ENCODE measurements at regions of chr1 and their contacts with region 1.

Region 1: GRCh38 chr1:65002508-65003315 is 36.4 kb upstream of the JAK1 start:
- DNase-seq: peak; percentile 86
- ATAC-seq: peak; percentile 85
- H3K4me3 Mint-ChIP-seq: peak overlapping the region; percentile 70
- H3K27ac Mint-ChIP-seq: peak overlapping the region; percentile 87
- H3K4me1 Mint-ChIP-seq: peaks cover 28% of the 10 kb centered on the region
- H3K27me3 Mint-ChIP-seq: no peaks in the 10 kb centered on the region

Region 2: GRCh38 chr1:64877151-64877550 is 125.6 kb before region 1 on chr1:
- CTCF ChIA-PET with region 1: no interaction called
- POLR2A ChIA-PET with region 1: no interaction called
- intact Hi-C with region 1: loop called in 1 of 2 experiments (anchors 2 kb)
- DNase-seq: peak; percentile 43
- ATAC-seq: peak; percentile 88
- H3K4me3 Mint-ChIP-seq: peak overlapping the region; percentile 4
- H3K27ac Mint-ChIP-seq: peak overlapping the region; percentile 35
- H3K4me1 Mint-ChIP-seq: peaks cover 60% of the 10 kb centered on the region
- H3K27me3 Mint-ChIP-seq: no peaks in the 10 kb centered on the region

Region 3: GRCh38 chr1:64898107-64898845 is 104.4 kb before region 1 on chr1:
- CTCF ChIA-PET with region 1: interaction called, 3 read pairs
- POLR2A ChIA-PET with region 1: no interaction called
- intact Hi-C with region 1: loop called in 1 of 2 experiments (anchors 5 kb)
- DNase-seq: peak; percentile 64
- ATAC-seq: peak; percentile 79
- H3K4me3 Mint-ChIP-seq: no peak overlapping the region
- H3K27ac Mint-ChIP-seq: no peak overlapping the region
- H3K4me1 Mint-ChIP-seq: peaks cover 93% of the 10 kb centered on the region
- H3K27me3 Mint-ChIP-seq: no peaks in the 10 kb centered on the region

Region 4: DNA sequence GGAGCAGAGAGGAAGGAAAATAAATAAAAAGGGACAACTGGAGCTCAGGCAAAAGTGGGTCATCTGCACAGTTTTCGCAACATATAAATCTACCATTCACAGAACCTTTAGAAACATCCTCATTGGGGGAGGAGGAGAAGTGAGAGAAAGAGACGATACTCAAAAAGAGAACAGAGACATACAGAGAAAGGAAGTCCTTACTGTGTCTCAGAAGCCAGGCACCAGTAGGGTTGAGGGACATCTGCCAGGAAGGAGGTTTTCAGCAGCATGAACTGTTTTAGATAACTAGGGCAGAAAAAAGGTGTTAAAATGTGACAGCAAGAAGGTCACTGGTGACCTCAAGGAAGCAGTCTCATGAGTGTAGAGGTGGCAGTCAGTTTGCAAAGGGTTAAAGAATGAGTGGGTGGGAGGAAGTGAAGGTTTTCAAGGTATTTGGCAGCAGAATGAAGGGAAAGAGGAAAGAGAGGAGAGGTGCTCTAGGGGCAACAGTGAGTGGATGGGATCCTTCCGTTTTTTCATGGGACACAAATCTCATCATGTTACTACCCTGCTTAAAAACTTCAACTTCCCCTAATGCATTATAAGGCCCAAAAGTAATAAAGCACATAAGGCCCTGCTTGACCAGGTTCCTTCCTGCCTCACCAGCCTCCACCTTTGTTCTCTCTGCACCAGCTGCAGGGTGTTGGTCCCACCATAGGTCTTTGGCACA is 45.8 kb before region 1 on chr1:
- CTCF ChIA-PET with region 1: interaction called, 4 read pairs
- POLR2A ChIA-PET with region 1: interaction called, 10 read pairs
- intact Hi-C with region 1: loop called in 1 of 2 experiments (anchors 2 kb)
- DNase-seq: peak; percentile 75
- ATAC-seq: peak; percentile 87
- H3K4me3 Mint-ChIP-seq: no peak overlapping the region
- H3K27ac Mint-ChIP-seq: no peak overlapping the region
- H3K4me1 Mint-ChIP-seq: peaks cover 61% of the 10 kb centered on the region
- H3K27me3 Mint-ChIP-seq: no peaks in the 10 kb centered on the region

Region 5: DNA sequence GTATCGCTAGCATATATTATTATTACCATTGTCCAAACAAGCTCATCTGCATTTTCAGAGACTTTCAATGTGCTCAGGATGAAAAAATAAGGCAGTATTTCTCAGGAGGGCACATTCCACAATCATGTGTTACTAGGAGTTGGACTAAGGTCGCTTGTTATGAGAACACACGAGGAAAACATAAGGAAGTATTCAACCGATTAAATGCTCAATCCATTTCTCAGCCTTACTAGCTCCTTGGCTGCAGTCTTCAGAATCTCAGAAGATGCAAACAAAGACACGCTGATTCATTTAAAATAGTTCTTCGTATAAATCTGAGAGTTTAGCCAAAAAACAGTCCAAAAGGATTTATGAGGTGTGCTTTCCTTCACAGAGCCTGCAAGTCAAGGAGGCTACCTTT is 45.6 kb after region 1 on chr1:
- CTCF ChIA-PET with region 1: no interaction called
- POLR2A ChIA-PET with region 1: no interaction called
- intact Hi-C with region 1: loop called in 1 of 2 experiments (anchors 5 kb)
- DNase-seq: no peak
- ATAC-seq: no peak
- H3K4me3 Mint-ChIP-seq: no peak overlapping the region
- H3K27ac Mint-ChIP-seq: no peak overlapping the region
- H3K4me1 Mint-ChIP-seq: peaks cover 32% of the 10 kb centered on the region
- H3K27me3 Mint-ChIP-seq: no peaks in the 10 kb centered on the region

Region 6: GRCh38 chr1:65235867-65236805 is 233.4 kb after region 1 on chr1:
- CTCF ChIA-PET with region 1: no interaction called
- POLR2A ChIA-PET with region 1: no interaction called
- intact Hi-C with region 1: no loop called
- DNase-seq: no peak
- ATAC-seq: no peak
- H3K4me3 Mint-ChIP-seq: no peak overlapping the region
- H3K27ac Mint-ChIP-seq: no peak overlapping the region
- H3K4me1 Mint-ChIP-seq: peaks cover 10% of the 10 kb centered on the region
- H3K27me3 Mint-ChIP-seq: peaks cover 12% of the 10 kb centered on the region